ENCODE measurements at regions of chr15 and their contacts with region 1.

Region 1: DNA sequence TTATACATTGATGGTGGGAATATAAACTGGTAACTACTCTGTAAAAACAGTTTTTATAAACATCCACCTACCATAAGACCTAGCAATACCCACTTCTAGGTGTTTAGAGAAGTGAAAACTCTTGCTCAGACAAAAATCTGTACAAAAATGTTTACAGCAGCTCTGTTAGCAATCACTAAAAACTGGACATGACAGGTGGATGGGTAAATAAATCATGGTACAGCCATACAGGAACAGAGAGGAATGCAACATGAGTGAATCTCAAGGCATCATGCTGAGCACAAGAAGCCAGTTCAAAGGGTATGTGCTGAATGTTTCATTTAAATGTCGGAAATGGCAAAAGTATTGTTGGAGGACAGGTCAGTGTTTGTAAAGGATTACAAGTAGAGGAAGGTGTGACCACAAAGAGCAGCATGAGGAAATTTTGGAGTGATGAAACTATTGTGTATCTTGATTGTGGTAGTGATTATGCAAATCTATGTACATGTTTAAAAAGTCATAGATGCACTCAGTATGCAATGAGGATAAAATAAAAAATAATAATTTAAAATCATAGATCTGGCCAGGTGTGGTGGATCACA is 2.8 kb upstream of the RNU5A-1 start:
- DNase-seq: peak in 2 of 3 donors; percentile 23 to 35
- H3K4me3 ChIP-seq: no peak overlapping the region
- H3K4me3 Mint-ChIP-seq: no peak overlapping the region
- H3K27ac ChIP-seq: no peak overlapping the region
- H3K27ac Mint-ChIP-seq: no peak overlapping the region
- H3K4me1 ChIP-seq: peaks cover 31 to 42% of the 10 kb centered on the region in 2 donors
- H3K4me1 Mint-ChIP-seq: peaks cover 22% of the 10 kb centered on the region
- H3K27me3 ChIP-seq: no peaks in the 10 kb centered on the region
- H3K27me3 Mint-ChIP-seq: peaks cover 0 to 14% (median 0%) of the 10 kb centered on the region in 3 donors
- CTCF ChIP-seq: no peak

Region 2: GRCh38 chr15:64702816-64703646 is 590.0 kb before region 1 on chr15:
- intact Hi-C with region 1: loop called in 1 of 2 experiments (anchors 10 kb)
- DNase-seq: peak; percentile 83 to 89 (median 87)
- H3K4me3 ChIP-seq: peak overlapping the region; percentile 83 to 99 (median 95)
- H3K4me3 Mint-ChIP-seq: peak overlapping the region; percentile 89 to 95
- H3K27ac ChIP-seq: peak overlapping the region; percentile 75 to 91
- H3K27ac Mint-ChIP-seq: peak overlapping the region; percentile 80 to 96 (median 93)
- H3K4me1 ChIP-seq: peaks cover 40 to 51% of the 10 kb centered on the region in 2 donors
- H3K4me1 Mint-ChIP-seq: peaks cover 50% of the 10 kb centered on the region
- H3K27me3 ChIP-seq: no peaks in the 10 kb centered on the region
- H3K27me3 Mint-ChIP-seq: peaks cover 0 to 2% (median 0%) of the 10 kb centered on the region in 3 donors
- CTCF ChIP-seq: no peak

Region 3: GRCh38 chr15:65032801-65033537 is 260.1 kb before region 1 on chr15:
- intact Hi-C with region 1: loop called in 1 of 2 experiments (anchors 10 kb)
- DNase-seq: peak; percentile 46 to 69 (median 67)
- H3K4me3 ChIP-seq: no peak overlapping the region
- H3K4me3 Mint-ChIP-seq: peak overlapping the region in 1 of 2 donors; percentile 59
- H3K27ac ChIP-seq: no peak overlapping the region
- H3K27ac Mint-ChIP-seq: peak overlapping the region in 1 of 7 donors; percentile 40
- H3K4me1 ChIP-seq: peaks cover 17 to 20% of the 10 kb centered on the region in 2 donors
- H3K4me1 Mint-ChIP-seq: peaks cover 21% of the 10 kb centered on the region
- H3K27me3 ChIP-seq: peaks cover 0 to 9% of the 10 kb centered on the region in 2 donors
- H3K27me3 Mint-ChIP-seq: peaks cover 8 to 16% (median 12%) of the 10 kb centered on the region in 3 donors
- CTCF ChIP-seq: peak; percentile 67

Region 4: DNA sequence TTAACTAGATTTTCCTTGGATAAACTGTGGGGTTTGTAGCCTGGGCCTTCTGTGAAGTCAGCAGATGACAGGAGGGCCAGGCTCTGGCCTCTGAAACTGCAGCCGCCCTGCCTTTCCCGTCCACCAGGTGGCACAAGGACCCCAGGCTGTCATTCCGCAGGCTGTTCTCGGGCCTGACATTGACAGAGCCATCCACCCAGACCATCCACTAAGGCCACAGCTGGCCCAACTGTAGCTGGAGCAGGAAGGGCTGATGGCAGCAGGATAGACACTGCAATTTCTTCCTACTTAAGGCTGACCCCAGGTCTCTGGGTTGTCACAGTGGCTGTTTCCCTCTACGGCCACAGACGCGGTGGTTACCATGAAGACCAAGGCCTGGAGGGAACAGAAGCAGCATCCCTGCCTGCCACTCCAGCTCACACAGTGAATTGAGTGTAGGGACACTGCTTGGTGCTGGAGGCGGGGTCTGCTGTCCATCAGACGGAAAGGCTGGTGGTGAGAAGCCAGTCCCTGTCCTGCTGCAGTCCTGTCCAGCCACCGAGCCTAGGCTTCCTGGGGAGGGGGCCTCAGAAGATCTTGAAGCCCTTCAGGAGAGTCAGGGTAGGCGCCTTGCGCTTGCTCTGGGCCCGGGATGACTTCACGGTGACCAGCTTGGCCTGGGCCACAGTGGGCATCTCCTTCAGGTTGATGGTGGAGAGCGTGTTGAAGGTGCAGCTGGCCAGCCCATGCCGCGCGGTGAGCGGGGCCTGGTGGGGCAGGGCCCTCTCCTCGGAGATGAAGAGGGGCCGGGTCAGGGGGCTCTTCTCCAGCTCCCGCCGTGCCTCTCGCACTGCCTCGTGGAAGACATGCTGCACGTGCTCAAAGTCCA is 238.5 kb before region 1 on chr15:
- intact Hi-C with region 1: loop called in 1 of 2 experiments (anchors 10 kb)
- DNase-seq: peak; percentile 27 to 48 (median 39)
- H3K4me3 ChIP-seq: no peak overlapping the region
- H3K4me3 Mint-ChIP-seq: no peak overlapping the region
- H3K27ac ChIP-seq: no peak overlapping the region
- H3K27ac Mint-ChIP-seq: peak overlapping the region in 1 of 7 donors; percentile 13
- H3K4me1 ChIP-seq: peaks cover 4 to 9% of the 10 kb centered on the region in 2 donors
- H3K4me1 Mint-ChIP-seq: peaks cover 10% of the 10 kb centered on the region
- H3K27me3 ChIP-seq: no peaks in the 10 kb centered on the region
- H3K27me3 Mint-ChIP-seq: peaks cover 7 to 24% (median 9%) of the 10 kb centered on the region in 3 donors
- CTCF ChIP-seq: peak; percentile 79

Region 5: GRCh38 chr15:65133548-65134200 is 159.4 kb before region 1 on chr15 and contains the start of gene PDCD7:
- intact Hi-C with region 1: no loop called
- DNase-seq: peak; percentile 79 to 84 (median 80)
- H3K4me3 ChIP-seq: peak within 1 kb of the TSS; percentile 49 to 85 (median 67)
- H3K4me3 Mint-ChIP-seq: peak within 1 kb of the TSS; percentile 91 to 96
- H3K27ac ChIP-seq: peak within 1 kb of the TSS; percentile 14 to 84
- H3K27ac Mint-ChIP-seq: peak within 1 kb of the TSS; percentile 89 to 94 (median 92)
- H3K4me1 ChIP-seq: peaks cover 10 to 17% of the 10 kb centered on the region in 2 donors
- H3K4me1 Mint-ChIP-seq: peaks cover 24% of the 10 kb centered on the region
- H3K27me3 ChIP-seq: no peaks in the 10 kb centered on the region
- H3K27me3 Mint-ChIP-seq: no peaks in the 10 kb centered on the region
- CTCF ChIP-seq: no peak
- polyA plus RNA-seq, gene PDCD7: 3.1 to 6.9 (median 4.7) TPM